ENCODE measurements at regions of chr5 and their contacts with region 1.

Region 1: GRCh38 chr5:72451741-72452505 is 55.3 kb downstream of the ZNF366 start:
- DNase-seq: peak; percentile 57 to 89
- ATAC-seq: peak; percentile 78 to 89 (median 84)
- H3K4me3 ChIP-seq: peak overlapping the region in 1 of 10 donors; percentile 9
- H3K27ac ChIP-seq: peak overlapping the region; percentile 88 to 99 (median 93)
- H3K4me1 ChIP-seq: peaks cover 30 to 77% (median 70%) of the 10 kb centered on the region in 9 donors
- H3K27me3 ChIP-seq: no peaks in the 10 kb centered on the region
- CTCF ChIP-seq: no peak

Region 2: DNA sequence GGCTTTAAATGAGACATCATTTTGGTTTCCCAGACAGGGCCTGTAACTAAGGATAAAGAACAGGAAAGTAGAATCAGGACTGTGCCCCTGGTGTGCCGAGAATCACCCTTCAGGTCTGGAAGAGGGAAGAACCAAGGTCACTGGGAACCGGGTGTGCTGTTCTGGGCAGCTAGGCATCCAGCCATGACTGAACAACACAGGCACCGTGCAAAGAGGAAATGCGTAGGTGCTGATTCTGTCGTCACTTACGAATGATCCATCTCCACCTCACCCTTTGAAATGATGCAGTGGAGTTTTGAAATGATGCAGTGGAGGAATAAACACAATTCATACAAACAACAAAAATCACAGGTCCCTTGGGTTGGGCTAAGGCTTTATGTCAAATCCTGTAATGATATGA is 280.3 kb before region 1 on chr5:
- intact Hi-C with region 1: no loop called
- DNase-seq: peak in 1 of 2 donors; percentile 27
- ATAC-seq: peak in 6 of 8 donors; percentile 72 to 93 (median 89)
- H3K4me3 ChIP-seq: no peak overlapping the region
- H3K27ac ChIP-seq: peak overlapping the region in 2 of 10 donors; percentile 1 to 2
- H3K4me1 ChIP-seq: peaks cover 4 to 22% (median 17%) of the 10 kb centered on the region in 9 donors
- H3K27me3 ChIP-seq: peaks cover 0 to 6% (median 0%) of the 10 kb centered on the region in 7 donors
- CTCF ChIP-seq: no peak

Region 3: DNA sequence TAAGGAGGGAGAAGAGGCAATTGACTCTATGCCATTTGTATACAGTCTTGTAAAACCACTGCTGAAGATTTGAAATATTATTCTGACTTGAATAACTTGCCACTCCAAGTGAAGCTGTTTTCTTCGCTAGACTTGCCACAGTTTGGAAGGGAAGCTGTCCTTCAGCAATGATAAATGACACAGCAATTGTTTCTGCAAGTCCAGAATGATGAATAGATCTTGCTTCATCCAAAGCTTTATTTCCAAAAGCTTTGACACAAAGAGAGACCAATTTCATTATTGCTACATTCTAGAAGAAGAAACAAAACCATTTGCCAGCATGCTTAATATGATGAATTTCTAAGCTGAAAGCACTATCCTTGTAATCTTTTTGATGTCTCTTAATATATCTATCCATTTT is 18.4 kb before region 1 on chr5:
- intact Hi-C with region 1: loop called in 1 of 10 experiments (anchors 1 kb)
- DNase-seq: no peak
- ATAC-seq: no peak
- H3K4me3 ChIP-seq: no peak overlapping the region
- H3K27ac ChIP-seq: peak overlapping the region in 7 of 10 donors; percentile 24 to 83 (median 67)
- H3K4me1 ChIP-seq: peaks cover 0 to 45% (median 31%) of the 10 kb centered on the region in 9 donors
- H3K27me3 ChIP-seq: no peaks in the 10 kb centered on the region
- CTCF ChIP-seq: no peak

Region 4: GRCh38 chr5:72503888-72504491 is 52.1 kb after region 1 on chr5:
- intact Hi-C with region 1: loop called in 5 of 10 experiments (anchors 1 to 10 kb)
- DNase-seq: no peak
- ATAC-seq: peak in 7 of 8 donors; percentile 41 to 81 (median 68)
- H3K4me3 ChIP-seq: peak overlapping the region in 9 of 10 donors; percentile 20 to 55 (median 46)
- H3K27ac ChIP-seq: peak overlapping the region in 9 of 10 donors; percentile 71 to 92 (median 80)
- H3K4me1 ChIP-seq: peaks cover 4 to 85% (median 48%) of the 10 kb centered on the region in 9 donors
- H3K27me3 ChIP-seq: no peaks in the 10 kb centered on the region
- CTCF ChIP-seq: no peak

Region 5: DNA sequence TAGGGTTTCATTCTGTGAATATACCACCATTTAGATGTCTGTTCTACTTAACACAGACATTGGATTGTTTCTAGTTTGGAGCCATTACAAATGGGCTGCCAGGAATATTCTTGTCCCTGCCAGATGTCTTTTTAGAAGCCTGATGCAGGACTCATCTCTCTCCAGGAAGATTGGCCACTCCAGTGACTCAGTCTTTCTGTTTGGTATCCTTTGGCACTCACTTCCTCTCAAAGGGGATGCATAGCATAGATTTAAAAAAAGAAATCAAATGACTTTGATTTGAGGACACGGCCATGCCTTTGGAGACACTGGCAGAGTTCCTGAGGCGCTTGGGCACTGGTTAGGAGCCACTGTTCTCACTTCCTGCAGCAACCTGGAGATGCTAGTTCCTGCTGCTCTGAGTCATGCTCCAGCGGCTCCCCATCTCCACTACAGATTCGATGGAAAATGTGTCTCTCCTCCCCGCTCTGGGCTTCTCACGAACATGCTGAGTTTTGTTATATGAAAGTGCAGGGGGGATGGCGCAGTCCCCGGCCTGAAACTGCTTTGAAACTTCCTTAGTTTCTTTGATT is 58.8 kb after region 1 on chr5:
- intact Hi-C with region 1: loop called in 7 of 10 experiments (anchors 2 to 10 kb)
- DNase-seq: peak in 1 of 2 donors; percentile 23
- ATAC-seq: peak in 4 of 8 donors; percentile 27 to 75 (median 66)
- H3K4me3 ChIP-seq: no peak overlapping the region
- H3K27ac ChIP-seq: peak overlapping the region in 8 of 10 donors; percentile 15 to 92 (median 80)
- H3K4me1 ChIP-seq: peaks cover 10 to 61% (median 40%) of the 10 kb centered on the region in 9 donors
- H3K27me3 ChIP-seq: no peaks in the 10 kb centered on the region
- CTCF ChIP-seq: no peak

Region 6: DNA sequence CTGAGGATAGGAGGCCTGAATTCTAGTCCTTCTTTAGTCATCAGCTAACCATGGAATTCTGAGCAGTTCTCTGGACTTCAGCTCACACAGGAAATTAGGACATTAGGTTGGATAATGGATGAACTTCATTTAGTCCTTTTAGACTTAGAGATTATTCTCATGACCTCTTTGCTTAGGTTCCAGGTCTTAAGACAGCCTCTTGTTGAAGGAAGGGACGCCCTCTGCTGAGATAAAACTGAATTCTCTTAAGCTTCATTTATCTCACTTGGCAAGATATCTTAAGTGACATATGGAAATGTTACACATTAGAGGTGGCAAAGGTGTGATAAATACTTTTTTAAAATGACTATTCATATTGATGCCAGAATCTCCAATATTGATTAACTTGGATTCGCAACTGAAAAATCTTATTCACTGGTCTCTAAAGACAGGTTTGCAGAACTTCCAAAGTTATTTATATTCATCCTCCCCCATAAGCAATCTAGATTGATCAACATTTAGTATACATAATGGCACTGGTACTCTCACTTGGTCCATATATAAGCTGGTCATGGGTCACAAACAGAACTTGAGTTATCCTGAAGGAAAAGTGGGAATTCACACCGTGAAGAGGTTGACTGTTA is 72.1 kb after region 1 on chr5:
- intact Hi-C with region 1: loop called in 4 of 10 experiments (anchors 2 to 10 kb)
- DNase-seq: no peak
- ATAC-seq: peak; percentile 44 to 91 (median 81)
- H3K4me3 ChIP-seq: no peak overlapping the region
- H3K27ac ChIP-seq: peak overlapping the region in 4 of 10 donors; percentile 1 to 59 (median 20)
- H3K4me1 ChIP-seq: peaks cover 0 to 19% (median 7%) of the 10 kb centered on the region in 9 donors
- H3K27me3 ChIP-seq: no peaks in the 10 kb centered on the region
- CTCF ChIP-seq: peak; percentile 59 to 86 (median 68)